Naive thymus-derived CD4-positive, alpha-beta T cell (primary cell): ENCODE measurements at regions of chr12 and their contacts with region 1.

Region 1: GRCh38 chr12:6647083-6647604 is at the start of gene ACRBP:
- DNase-seq: peak in 4 of 9 donors; percentile 19 to 64 (median 29)
- ATAC-seq: peak; percentile 84
- H3K4me3 ChIP-seq: peak within 1 kb of the TSS; percentile 43
- H3K4me3 Mint-ChIP-seq: peak within 1 kb of the TSS; percentile 70 to 88 (median 76)
- H3K27ac ChIP-seq: peak within 1 kb of the TSS; percentile 37
- H3K27ac Mint-ChIP-seq: peak within 1 kb of the TSS in 6 of 9 donors; percentile 16 to 89 (median 62)
- H3K4me1 ChIP-seq: peaks cover 0 to 5% of the 10 kb centered on the region in 2 donors
- H3K4me1 Mint-ChIP-seq: peaks cover 15 to 26% (median 18%) of the 10 kb centered on the region in 7 donors
- H3K27me3 ChIP-seq: no peaks in the 10 kb centered on the region
- H3K27me3 Mint-ChIP-seq: peaks cover 0 to 3% (median 0%) of the 10 kb centered on the region in 5 donors
- total RNA-seq, gene ACRBP: 2.3 to 23.0 (median 6.6) TPM

Region 2: DNA sequence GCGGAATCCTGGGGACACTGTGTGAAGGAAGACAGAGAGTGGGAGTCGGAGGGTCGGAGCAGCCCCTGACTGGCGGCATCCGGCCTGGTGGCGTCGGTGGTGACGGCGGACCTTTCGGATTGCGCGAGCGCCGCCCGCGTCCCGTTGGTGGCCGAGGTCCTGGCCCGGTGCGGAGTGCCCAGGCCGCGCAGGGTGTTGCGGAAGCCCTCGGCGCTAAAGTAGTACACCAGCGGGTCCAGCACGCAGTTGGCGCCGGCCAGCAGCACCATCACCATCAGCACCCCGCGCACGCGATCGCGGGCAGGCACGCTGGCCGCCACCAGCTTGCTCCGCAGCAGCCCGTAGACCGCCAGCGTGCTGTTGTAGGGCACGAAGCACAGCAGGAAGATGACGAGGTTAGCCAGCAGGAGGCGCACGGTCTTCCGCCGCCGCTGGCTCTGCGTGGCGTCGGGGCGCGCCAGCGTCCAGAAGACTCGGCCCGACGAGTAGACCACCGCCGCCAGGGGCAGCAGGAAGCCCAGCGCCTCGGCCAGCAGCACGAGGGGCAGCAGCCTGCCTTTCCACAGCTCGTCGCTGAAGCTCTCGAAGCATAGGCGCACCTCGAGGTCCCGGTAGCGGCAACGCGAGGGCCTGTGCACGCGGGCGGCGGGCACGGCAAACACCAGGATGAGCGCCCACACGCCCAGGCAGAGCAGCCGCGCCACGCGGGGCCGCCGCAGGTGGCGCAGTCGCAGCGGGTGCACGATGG is 26.8 kb before region 1 on chr12:
- CTCF ChIA-PET with region 1: interaction called, 18 read pairs
- POLR2A ChIA-PET with region 1: interaction called, 6 read pairs
- intact Hi-C with region 1: loop called in 1 of 2 experiments (anchors 1 kb)
- DNase-seq: peak in 7 of 9 donors; percentile 49 to 63 (median 60)
- ATAC-seq: peak; percentile 88
- H3K4me3 ChIP-seq: no peak overlapping the region
- H3K4me3 Mint-ChIP-seq: peak overlapping the region in 8 of 10 donors; percentile 40 to 83 (median 68)
- H3K27ac ChIP-seq: peak overlapping the region; percentile 46
- H3K27ac Mint-ChIP-seq: peak overlapping the region in 6 of 9 donors; percentile 45 to 88 (median 84)
- H3K4me1 ChIP-seq: peaks cover 0 to 5% of the 10 kb centered on the region in 2 donors
- H3K4me1 Mint-ChIP-seq: peaks cover 0 to 42% (median 26%) of the 10 kb centered on the region in 7 donors
- H3K27me3 ChIP-seq: no peaks in the 10 kb centered on the region
- H3K27me3 Mint-ChIP-seq: no peaks in the 10 kb centered on the region

Region 3: GRCh38 chr12:6632026-6632983 is 14.8 kb before region 1 on chr12:
- CTCF ChIA-PET with region 1: interaction called, 3 read pairs
- POLR2A ChIA-PET with region 1: interaction called, 17 read pairs
- intact Hi-C with region 1: loop called in 1 of 2 experiments (anchors 2 kb)
- DNase-seq: peak in 8 of 9 donors; percentile 43 to 75 (median 66)
- ATAC-seq: peak; percentile 81
- H3K4me3 ChIP-seq: peak overlapping the region; percentile 56
- H3K4me3 Mint-ChIP-seq: peak overlapping the region; percentile 80 to 94 (median 88)
- H3K27ac ChIP-seq: peak overlapping the region; percentile 81
- H3K27ac Mint-ChIP-seq: peak overlapping the region; percentile 94 to 99 (median 97)
- H3K4me1 ChIP-seq: peaks cover 26 to 40% of the 10 kb centered on the region in 2 donors
- H3K4me1 Mint-ChIP-seq: peaks cover 46 to 68% (median 58%) of the 10 kb centered on the region in 7 donors
- H3K27me3 ChIP-seq: no peaks in the 10 kb centered on the region
- H3K27me3 Mint-ChIP-seq: no peaks in the 10 kb centered on the region

Region 4: GRCh38 chr12:6697584-6698351 is 50.6 kb after region 1 on chr12:
- CTCF ChIA-PET with region 1: no interaction called
- POLR2A ChIA-PET with region 1: no interaction called
- intact Hi-C with region 1: no loop called
- DNase-seq: no peak
- ATAC-seq: peak; percentile 25
- H3K4me3 ChIP-seq: no peak overlapping the region
- H3K4me3 Mint-ChIP-seq: peak overlapping the region in 1 of 10 donors; percentile 25
- H3K27ac ChIP-seq: no peak overlapping the region
- H3K27ac Mint-ChIP-seq: peak overlapping the region in 2 of 9 donors; percentile 24 to 51
- H3K4me1 ChIP-seq: peaks cover 5 to 8% of the 10 kb centered on the region in 2 donors
- H3K4me1 Mint-ChIP-seq: peaks cover 9 to 39% (median 28%) of the 10 kb centered on the region in 7 donors
- H3K27me3 ChIP-seq: peaks cover 0 to 6% of the 10 kb centered on the region in 2 donors
- H3K27me3 Mint-ChIP-seq: peaks cover 0 to 47% (median 29%) of the 10 kb centered on the region in 5 donors